ENCODE measurements at regions of chr5 and their contacts with region 1.

Region 1: DNA sequence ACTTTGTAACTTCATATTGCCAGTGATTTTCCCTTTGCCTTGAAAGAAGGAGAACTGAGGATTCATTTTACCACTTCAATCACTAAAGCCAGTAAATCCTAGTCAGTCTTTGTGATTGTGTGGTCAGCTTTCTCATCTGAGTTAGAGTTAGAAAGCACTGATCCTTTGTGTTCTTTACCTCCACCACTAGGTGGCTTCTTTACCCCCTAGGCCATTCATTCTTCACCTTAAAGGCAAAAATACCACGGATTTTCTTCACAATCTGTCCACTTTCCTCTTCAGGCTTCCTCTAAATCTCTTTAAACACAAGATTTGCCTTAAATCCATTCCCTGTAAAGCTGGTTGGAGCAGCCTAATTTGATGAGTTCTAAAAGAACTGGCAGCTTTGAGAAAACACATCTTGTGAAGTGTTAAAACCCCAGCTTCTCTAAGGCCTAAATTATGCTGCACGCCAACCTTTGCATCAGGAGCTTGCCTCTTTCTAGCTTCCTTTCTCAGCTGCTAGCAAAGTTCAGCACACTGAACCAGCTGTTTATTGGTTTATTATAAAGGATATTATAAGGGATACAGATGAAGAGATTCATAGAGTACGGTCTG is 20.4 kb downstream of the BDP1 start:
- DNase-seq: peak in 3 of 9 donors; percentile 5 to 15 (median 5)
- ATAC-seq: no peak
- H3K4me3 ChIP-seq: no peak overlapping the region
- H3K4me3 Mint-ChIP-seq: no peak overlapping the region
- H3K27ac ChIP-seq: no peak overlapping the region
- H3K27ac Mint-ChIP-seq: peak overlapping the region in 1 of 9 donors; percentile 60
- H3K4me1 ChIP-seq: no peaks in the 10 kb centered on the region
- H3K4me1 Mint-ChIP-seq: peaks cover 0 to 7% (median 0%) of the 10 kb centered on the region in 7 donors
- H3K27me3 ChIP-seq: no peaks in the 10 kb centered on the region
- H3K27me3 Mint-ChIP-seq: no peaks in the 10 kb centered on the region

Region 2: DNA sequence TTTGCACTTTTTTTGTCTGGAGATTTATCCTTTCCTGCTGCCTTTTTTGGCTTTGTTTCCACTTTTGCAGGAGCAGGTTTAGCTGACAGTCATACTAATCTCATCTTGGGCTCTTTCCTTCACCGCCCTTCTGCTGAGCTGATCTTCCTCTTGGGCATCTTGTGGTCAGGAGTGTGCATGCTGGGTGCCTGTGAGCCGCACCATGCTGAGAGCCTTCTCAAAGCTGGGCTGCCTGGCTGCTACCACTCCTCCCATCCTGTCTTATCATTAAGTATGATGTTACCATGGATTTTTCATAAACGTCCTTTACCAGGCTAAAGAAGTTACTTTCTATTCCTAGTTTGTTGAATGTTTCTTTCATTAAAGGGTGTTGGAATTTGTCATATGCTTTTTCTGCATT is 61.8 kb after region 1 on chr5:
- CTCF ChIA-PET with region 1: no interaction called
- POLR2A ChIA-PET with region 1: no interaction called
- intact Hi-C with region 1: no loop called
- DNase-seq: no peak
- ATAC-seq: no peak
- H3K4me3 ChIP-seq: no peak overlapping the region
- H3K4me3 Mint-ChIP-seq: no peak overlapping the region
- H3K27ac ChIP-seq: no peak overlapping the region
- H3K27ac Mint-ChIP-seq: peak overlapping the region in 2 of 9 donors; percentile 2 to 46
- H3K4me1 ChIP-seq: no peaks in the 10 kb centered on the region
- H3K4me1 Mint-ChIP-seq: peaks cover 0 to 18% (median 12%) of the 10 kb centered on the region in 7 donors
- H3K27me3 ChIP-seq: no peaks in the 10 kb centered on the region
- H3K27me3 Mint-ChIP-seq: no peaks in the 10 kb centered on the region

Region 3: DNA sequence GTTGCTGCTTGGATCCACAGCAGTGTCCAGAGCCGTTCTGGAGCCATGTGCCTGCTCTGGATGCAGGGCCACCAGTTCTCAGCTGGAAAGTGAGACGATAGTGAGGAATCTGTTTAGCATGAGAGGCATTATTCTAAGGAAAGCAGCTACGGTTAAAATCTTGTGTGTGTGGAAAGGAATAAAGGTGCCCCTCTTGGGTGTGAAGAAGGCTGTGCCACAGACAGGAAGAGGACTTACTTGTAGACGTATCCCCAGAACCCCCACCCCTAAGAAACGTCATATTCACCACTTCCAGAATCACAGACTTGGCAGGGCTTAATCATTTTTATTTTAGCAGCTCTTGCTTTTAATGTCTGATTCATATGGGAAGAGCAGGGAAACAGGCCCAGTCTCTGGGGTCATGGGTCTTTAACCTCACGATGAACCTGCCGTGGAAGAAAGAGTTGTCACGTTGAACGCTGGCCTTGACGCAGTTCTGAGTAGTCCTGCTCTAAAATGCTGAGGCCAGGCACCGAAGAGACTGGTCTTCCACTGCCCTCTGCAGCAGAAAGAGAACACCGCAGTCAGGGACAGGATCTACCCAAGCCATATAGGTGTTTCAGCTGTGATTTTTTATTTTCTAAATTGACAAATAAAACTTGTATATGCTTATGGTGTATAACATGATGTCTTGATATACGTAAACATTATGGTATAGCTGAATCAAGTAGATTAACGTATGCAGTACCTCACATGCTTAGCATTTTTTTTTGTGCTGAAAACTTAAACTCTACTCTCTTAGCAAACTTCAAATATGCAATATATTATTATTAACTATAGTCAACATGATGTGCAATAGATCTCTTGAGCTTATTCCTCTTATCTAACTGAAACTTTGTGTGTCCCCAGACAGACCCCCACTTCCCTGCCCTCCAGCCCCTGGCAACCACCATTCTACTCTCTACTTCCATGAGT is 282.0 kb after region 1 on chr5:
- CTCF ChIA-PET with region 1: no interaction called
- POLR2A ChIA-PET with region 1: no interaction called
- intact Hi-C with region 1: loop called in 1 of 2 experiments (anchors 1 kb)
- DNase-seq: peak in 7 of 9 donors; percentile 2 to 45 (median 18)
- ATAC-seq: peak; percentile 83
- H3K4me3 ChIP-seq: no peak overlapping the region
- H3K4me3 Mint-ChIP-seq: peak overlapping the region in 7 of 10 donors; percentile 23 to 75 (median 60)
- H3K27ac ChIP-seq: no peak overlapping the region
- H3K27ac Mint-ChIP-seq: peak overlapping the region in 1 of 9 donors; percentile 60
- H3K4me1 ChIP-seq: no peaks in the 10 kb centered on the region
- H3K4me1 Mint-ChIP-seq: peaks cover 3 to 13% (median 8%) of the 10 kb centered on the region in 7 donors
- H3K27me3 ChIP-seq: no peaks in the 10 kb centered on the region
- H3K27me3 Mint-ChIP-seq: peaks cover 0 to 11% (median 3%) of the 10 kb centered on the region in 5 donors

Measured in naive thymus-derived CD4-positive, alpha-beta T cell (primary cell).